ENCODE measurements at regions of chr16 and their contacts with region 1.

Region 1: GRCh38 chr16:68756250-68756915 is 19.3 kb downstream of the CDH1 start:
- DNase-seq: peak; percentile 90
- ATAC-seq: peak; percentile 69
- H3K4me3 Mint-ChIP-seq: peak overlapping the region; percentile 52
- H3K27ac Mint-ChIP-seq: peak overlapping the region; percentile 97
- H3K4me1 Mint-ChIP-seq: peaks cover 66% of the 10 kb centered on the region
- H3K27me3 Mint-ChIP-seq: no peaks in the 10 kb centered on the region

Region 2: GRCh38 chr16:68417711-68418301 is 338.6 kb before region 1 on chr16:
- CTCF ChIA-PET with region 1: no interaction called
- POLR2A ChIA-PET with region 1: no interaction called
- intact Hi-C with region 1: loop called in 1 of 2 experiments (anchors 5 kb)
- DNase-seq: peak; percentile 85
- ATAC-seq: peak; percentile 91
- H3K4me3 Mint-ChIP-seq: peak overlapping the region; percentile 67
- H3K27ac Mint-ChIP-seq: peak overlapping the region; percentile 88
- H3K4me1 Mint-ChIP-seq: peaks cover 59% of the 10 kb centered on the region
- H3K27me3 Mint-ChIP-seq: no peaks in the 10 kb centered on the region

Region 3: DNA sequence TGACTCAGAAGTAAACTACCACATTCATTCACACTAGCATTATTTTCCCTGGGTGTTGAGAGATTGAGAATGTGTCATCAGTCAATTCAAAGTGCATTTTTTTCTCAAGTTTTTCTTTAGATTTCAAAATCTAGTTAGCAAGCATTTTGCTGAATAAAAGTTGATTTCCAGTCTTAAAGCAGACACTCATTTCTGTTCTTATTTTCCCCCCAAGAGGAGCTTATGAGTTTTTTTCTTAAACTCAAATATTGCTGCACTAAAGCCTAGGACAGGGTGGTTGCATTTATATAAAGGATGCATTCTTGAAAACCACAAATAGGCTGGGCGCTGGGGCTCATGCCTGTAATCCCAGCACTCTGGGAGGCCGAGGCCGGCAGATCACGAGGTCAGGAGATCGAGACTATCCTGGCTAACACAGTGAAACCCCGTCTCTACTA is 96.0 kb before region 1 on chr16:
- CTCF ChIA-PET with region 1: no interaction called
- POLR2A ChIA-PET with region 1: no interaction called
- intact Hi-C with region 1: loop called in 1 of 2 experiments (anchors 1 kb)
- DNase-seq: no peak
- ATAC-seq: peak; percentile 65
- H3K4me3 Mint-ChIP-seq: no peak overlapping the region
- H3K27ac Mint-ChIP-seq: no peak overlapping the region
- H3K4me1 Mint-ChIP-seq: peaks cover 9% of the 10 kb centered on the region
- H3K27me3 Mint-ChIP-seq: peaks cover 23% of the 10 kb centered on the region

Region 4: GRCh38 chr16:68719993-68720489 is 36.3 kb before region 1 on chr16:
- CTCF ChIA-PET with region 1: no interaction called
- POLR2A ChIA-PET with region 1: no interaction called
- intact Hi-C with region 1: loop called (anchors 1 kb)
- DNase-seq: peak; percentile 64
- ATAC-seq: peak; percentile 96
- H3K4me3 Mint-ChIP-seq: no peak overlapping the region
- H3K27ac Mint-ChIP-seq: peak overlapping the region; percentile 82
- H3K4me1 Mint-ChIP-seq: peaks cover 19% of the 10 kb centered on the region
- H3K27me3 Mint-ChIP-seq: no peaks in the 10 kb centered on the region

Region 5: DNA sequence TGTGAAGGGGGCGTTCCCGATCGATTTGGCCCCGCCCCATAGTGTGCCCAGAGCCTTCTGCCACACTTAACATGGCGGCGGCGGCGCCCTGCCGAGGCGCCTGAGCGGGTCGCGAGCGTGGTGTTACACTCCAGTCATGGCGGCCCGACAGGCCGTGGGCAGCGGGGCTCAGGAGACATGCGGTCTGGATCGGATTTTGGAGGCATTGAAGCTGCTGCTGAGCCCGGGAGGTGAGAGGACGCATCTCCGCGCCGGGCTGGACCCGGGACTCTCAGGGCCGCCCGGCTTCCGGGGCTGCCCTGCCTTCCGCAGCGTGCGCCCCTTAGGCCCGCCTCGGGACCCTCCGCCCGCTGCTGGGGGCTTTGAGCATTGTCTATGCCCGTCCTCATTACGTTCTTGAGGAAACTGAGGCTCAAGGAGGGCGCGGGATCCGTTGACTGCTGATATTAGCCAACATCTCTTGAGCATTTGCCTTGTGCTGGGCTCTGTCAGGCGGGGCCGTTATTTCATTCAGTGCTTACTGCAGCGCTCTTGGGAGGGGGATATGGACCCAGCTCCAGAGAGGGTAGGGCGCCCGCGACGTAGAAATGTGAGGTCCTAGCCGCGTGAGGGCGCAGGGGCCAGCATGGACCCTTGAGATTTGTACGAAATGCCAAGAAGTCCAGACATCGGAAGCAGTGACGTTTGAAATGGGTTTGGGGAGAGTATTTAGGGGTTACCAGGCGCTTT is 87.3 kb after region 1 on chr16 and contains the start of gene TANGO6:
- CTCF ChIA-PET with region 1: interaction called, 4 read pairs
- POLR2A ChIA-PET with region 1: interaction called, 9 read pairs
- intact Hi-C with region 1: loop called (anchors 1 kb)
- DNase-seq: peak; percentile 95
- ATAC-seq: peak; percentile 93
- H3K4me3 Mint-ChIP-seq: peak within 1 kb of the TSS; percentile 84
- H3K27ac Mint-ChIP-seq: peak within 1 kb of the TSS; percentile 91
- H3K4me1 Mint-ChIP-seq: peaks cover 27% of the 10 kb centered on the region
- H3K27me3 Mint-ChIP-seq: no peaks in the 10 kb centered on the region
- total RNA-seq, gene TANGO6: 29.7 to 31.2 TPM

Region 6: GRCh38 chr16:69243479-69243878 is 487.1 kb after region 1 on chr16:
- CTCF ChIA-PET with region 1: no interaction called
- POLR2A ChIA-PET with region 1: no interaction called
- intact Hi-C with region 1: no loop called
- DNase-seq: no peak
- ATAC-seq: no peak
- H3K4me3 Mint-ChIP-seq: no peak overlapping the region
- H3K27ac Mint-ChIP-seq: no peak overlapping the region
- H3K4me1 Mint-ChIP-seq: peaks cover 6% of the 10 kb centered on the region
- H3K27me3 Mint-ChIP-seq: no peaks in the 10 kb centered on the region

Region 7: GRCh38 chr16:70737377-70738082 is 1981.1 kb after region 1 on chr16:
- CTCF ChIA-PET with region 1: no interaction called
- POLR2A ChIA-PET with region 1: no interaction called
- intact Hi-C with region 1: loop called in 1 of 2 experiments (anchors 5 kb)
- DNase-seq: peak; percentile 91
- ATAC-seq: peak; percentile 88
- H3K4me3 Mint-ChIP-seq: peak overlapping the region; percentile 55
- H3K27ac Mint-ChIP-seq: peak overlapping the region; percentile 97
- H3K4me1 Mint-ChIP-seq: peaks cover 60% of the 10 kb centered on the region
- H3K27me3 Mint-ChIP-seq: no peaks in the 10 kb centered on the region